Activated CD4-positive, alpha-beta memory T cell treated with anti-CD3 and anti-CD28 coated beads for 36 hours (primary cell): ENCODE measurements at regions of chr7 and their contacts with region 1.

Region 1: DNA sequence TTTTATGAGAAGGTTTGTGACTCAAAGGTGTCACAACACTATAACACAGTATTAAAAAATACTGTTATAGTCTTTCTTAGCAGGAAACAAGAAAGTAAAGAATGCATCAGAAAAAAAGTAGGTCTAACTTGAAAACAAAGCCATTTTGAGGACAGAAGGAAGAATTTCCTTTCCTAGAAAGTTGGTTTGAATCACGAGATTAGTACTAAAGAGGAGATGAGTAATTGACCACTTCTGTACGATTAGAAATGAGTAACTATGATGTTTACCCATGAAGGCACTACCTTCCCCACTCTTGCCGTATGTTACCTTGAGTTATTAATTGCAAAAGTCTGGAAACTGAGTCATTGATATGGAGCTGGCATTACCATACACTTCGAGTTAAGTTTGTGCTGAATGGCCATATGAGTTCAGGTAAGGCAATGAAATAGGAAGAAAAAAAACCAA is 65.2 kb downstream of the FAM185A start:
- DNase-seq: no peak
- H3K4me3 Mint-ChIP-seq: no peak overlapping the region
- H3K27ac Mint-ChIP-seq: peak overlapping the region; percentile 61
- H3K4me1 Mint-ChIP-seq: peaks cover 14% of the 10 kb centered on the region
- H3K27me3 Mint-ChIP-seq: no peaks in the 10 kb centered on the region

Region 2: GRCh38 chr7:102834999-102835398 is 21.0 kb after region 1 on chr7:
- CTCF ChIA-PET with region 1: interaction called, 3 read pairs
- POLR2A ChIA-PET with region 1: interaction called, 3 read pairs
- intact Hi-C with region 1: loop called (anchors 1 kb)
- DNase-seq: peak; percentile 49
- H3K4me3 Mint-ChIP-seq: no peak overlapping the region
- H3K27ac Mint-ChIP-seq: peak overlapping the region; percentile 52
- H3K4me1 Mint-ChIP-seq: peaks cover 7% of the 10 kb centered on the region
- H3K27me3 Mint-ChIP-seq: no peaks in the 10 kb centered on the region

Region 3: DNA sequence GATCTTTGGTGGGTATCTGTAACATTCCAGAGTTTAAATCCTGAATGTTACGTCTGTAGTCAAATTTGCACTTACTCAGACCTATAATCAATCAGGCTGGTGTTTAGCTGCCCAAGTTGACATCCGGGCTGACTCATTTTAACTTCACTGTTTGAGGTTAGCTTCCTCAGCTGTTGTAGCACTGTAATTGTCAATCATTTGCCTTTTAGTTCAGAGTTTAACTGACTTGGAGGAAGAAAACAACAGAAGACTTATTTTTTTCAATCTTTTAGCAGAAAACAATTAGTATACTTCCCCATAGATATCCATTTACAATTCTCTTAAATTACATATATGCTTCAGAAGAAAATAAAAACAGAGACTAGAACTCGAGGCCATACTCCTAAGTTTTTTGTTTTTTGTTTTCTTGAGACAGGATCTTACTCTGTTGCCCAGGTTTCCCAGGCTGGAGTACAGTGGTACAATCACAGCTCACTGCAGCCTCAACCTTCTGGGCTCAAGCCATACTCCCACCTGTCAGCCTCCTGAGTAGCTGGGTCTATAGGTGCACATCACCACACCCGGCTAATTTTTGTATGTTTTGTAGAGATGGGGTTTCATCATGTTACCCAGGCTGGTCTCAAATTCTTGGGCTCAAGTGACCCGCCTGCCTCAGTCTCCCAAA is 60.2 kb after region 1 on chr7:
- CTCF ChIA-PET with region 1: no interaction called
- POLR2A ChIA-PET with region 1: no interaction called
- intact Hi-C with region 1: loop called (anchors 2 kb)
- DNase-seq: peak; percentile 51
- H3K4me3 Mint-ChIP-seq: no peak overlapping the region
- H3K27ac Mint-ChIP-seq: no peak overlapping the region
- H3K4me1 Mint-ChIP-seq: peaks cover 21% of the 10 kb centered on the region
- H3K27me3 Mint-ChIP-seq: no peaks in the 10 kb centered on the region